Activated T-helper 2 cell treated with anti-CD3 and anti-CD28 coated beads, Interferon-gamma antibody, Interleukin-2, Interleukin-4, amounts not matched to agents 10 μg/mL and 5 μg/mL and 100 μg/mL, durations not matched to agents 14 hours and 24 hours and 36 hours (primary cell): ENCODE measurements at regions of chr18 and their contacts with region 1.

Region 1: DNA sequence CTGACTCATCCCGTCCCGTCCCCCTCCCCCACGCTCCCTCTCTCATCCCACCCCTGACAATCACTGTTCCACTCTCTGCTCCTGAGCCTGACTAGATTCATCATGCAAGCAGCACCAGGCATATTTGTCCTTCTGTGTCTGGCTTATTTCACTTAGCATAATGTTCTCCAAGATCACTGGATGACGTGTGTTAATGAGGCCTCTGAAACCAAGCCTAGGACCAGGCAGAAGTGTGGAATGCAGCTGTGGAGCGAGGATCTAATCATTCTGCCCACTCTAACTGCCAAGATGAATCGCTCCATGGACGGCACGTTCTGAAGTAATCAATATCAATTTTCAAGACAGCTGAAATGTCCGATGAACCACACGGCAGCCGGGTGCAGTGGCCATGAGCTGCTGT is 122.4 kb upstream of the ZNF236 start:
- DNase-seq: no peak
- H3K4me3 Mint-ChIP-seq: no peak overlapping the region
- H3K27ac Mint-ChIP-seq: no peak overlapping the region
- H3K4me1 Mint-ChIP-seq: peaks cover 5% of the 10 kb centered on the region
- H3K27me3 Mint-ChIP-seq: peaks cover 50% of the 10 kb centered on the region

Region 2: DNA sequence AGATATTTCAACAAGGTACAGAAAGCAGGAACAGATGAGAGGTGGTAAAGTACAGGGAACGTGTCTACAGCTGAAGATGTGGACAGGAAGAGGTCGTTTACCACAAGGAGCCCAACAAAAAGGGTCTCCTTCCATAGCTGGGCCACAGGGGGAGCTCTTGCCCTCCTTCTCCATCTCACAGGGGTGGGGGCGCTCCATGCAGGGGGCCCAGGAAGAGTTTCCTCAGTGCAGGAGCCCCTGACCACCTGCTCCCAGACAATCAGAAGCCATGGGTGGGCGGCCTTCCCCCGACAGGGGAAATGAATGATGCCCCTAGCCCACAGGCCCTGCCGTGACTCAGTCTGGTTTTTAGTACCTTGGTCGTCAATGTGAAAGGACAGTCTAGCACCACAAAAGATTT is 41.3 kb before region 1 on chr18:
- intact Hi-C with region 1: no loop called
- DNase-seq: no peak
- H3K4me3 Mint-ChIP-seq: no peak overlapping the region
- H3K27ac Mint-ChIP-seq: no peak overlapping the region
- H3K4me1 Mint-ChIP-seq: peaks cover 21% of the 10 kb centered on the region
- H3K27me3 Mint-ChIP-seq: peaks cover 53% of the 10 kb centered on the region

Region 3: GRCh38 chr18:76736309-76736708 is 36.4 kb after region 1 on chr18:
- intact Hi-C with region 1: loop called (anchors 5 kb)
- DNase-seq: no peak
- H3K4me3 Mint-ChIP-seq: no peak overlapping the region
- H3K27ac Mint-ChIP-seq: no peak overlapping the region
- H3K4me1 Mint-ChIP-seq: peaks cover 12% of the 10 kb centered on the region
- H3K27me3 Mint-ChIP-seq: peaks cover 37% of the 10 kb centered on the region